ENCODE measurements at regions of chr6 and their contacts with region 1.

Region 1: DNA sequence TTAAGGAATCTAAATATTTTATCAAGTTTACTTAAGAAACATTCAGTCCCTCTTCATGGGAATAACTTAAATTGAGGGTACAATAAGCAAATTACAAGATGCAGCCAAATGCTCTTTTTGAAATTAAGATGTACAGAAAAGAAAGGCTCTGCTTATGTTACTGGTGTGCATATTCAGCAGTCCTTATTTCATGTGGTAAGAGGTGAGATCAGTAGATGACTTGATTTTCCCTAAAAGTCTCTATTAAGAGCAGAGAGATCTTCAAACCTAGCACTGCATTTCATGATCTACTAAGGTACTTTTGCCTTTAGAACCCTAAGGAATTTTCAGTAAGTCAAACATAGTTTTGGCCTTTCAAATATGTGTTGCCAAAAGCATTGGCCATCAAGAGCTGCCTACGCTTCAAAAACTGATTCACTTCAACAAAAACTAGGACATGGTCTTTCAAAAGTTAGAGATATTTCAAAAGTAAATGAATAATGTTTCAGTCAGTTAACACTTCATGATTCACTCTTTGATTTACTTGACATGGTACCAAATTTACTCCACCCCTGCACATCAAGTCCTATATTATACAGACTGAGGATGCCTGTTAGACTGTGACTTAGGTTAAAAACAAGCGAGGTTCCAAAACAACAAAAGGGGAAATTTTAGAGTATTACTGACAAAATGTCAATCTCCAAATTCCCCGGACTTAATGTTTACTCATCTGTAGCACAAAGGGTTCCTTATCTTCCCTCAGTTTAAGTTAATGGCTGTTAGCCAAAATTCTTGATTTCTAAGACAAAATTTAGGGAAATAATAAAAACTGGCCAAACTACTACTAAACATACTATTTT is 19.2 kb downstream of the C6orf62 start:
- DNase-seq: no peak
- H3K4me3 Mint-ChIP-seq: no peak overlapping the region
- H3K27ac Mint-ChIP-seq: no peak overlapping the region
- H3K4me1 Mint-ChIP-seq: peaks cover 41% of the 10 kb centered on the region
- H3K27me3 Mint-ChIP-seq: no peaks in the 10 kb centered on the region
- CTCF ChIP-seq: no peak

Region 2: GRCh38 chr6:24646782-24647181 is 53.0 kb before region 1 on chr6:
- CTCF ChIA-PET with region 1: no interaction called
- intact Hi-C with region 1: loop called (anchors 5 kb)
- DNase-seq: peak; percentile 60
- H3K4me3 Mint-ChIP-seq: peak overlapping the region; percentile 96
- H3K27ac Mint-ChIP-seq: peak overlapping the region; percentile 80
- H3K4me1 Mint-ChIP-seq: peaks cover 38% of the 10 kb centered on the region
- H3K27me3 Mint-ChIP-seq: no peaks in the 10 kb centered on the region
- CTCF ChIP-seq: no peak

Region 3: GRCh38 chr6:24766680-24767462 is 67.1 kb after region 1 on chr6:
- CTCF ChIA-PET with region 1: interaction called, 6 read pairs
- intact Hi-C with region 1: loop called (anchors 1 kb)
- DNase-seq: no peak
- H3K4me3 Mint-ChIP-seq: no peak overlapping the region
- H3K27ac Mint-ChIP-seq: peak overlapping the region; percentile 17
- H3K4me1 Mint-ChIP-seq: peaks cover 25% of the 10 kb centered on the region
- H3K27me3 Mint-ChIP-seq: no peaks in the 10 kb centered on the region
- CTCF ChIP-seq: peak; percentile 67

Region 4: DNA sequence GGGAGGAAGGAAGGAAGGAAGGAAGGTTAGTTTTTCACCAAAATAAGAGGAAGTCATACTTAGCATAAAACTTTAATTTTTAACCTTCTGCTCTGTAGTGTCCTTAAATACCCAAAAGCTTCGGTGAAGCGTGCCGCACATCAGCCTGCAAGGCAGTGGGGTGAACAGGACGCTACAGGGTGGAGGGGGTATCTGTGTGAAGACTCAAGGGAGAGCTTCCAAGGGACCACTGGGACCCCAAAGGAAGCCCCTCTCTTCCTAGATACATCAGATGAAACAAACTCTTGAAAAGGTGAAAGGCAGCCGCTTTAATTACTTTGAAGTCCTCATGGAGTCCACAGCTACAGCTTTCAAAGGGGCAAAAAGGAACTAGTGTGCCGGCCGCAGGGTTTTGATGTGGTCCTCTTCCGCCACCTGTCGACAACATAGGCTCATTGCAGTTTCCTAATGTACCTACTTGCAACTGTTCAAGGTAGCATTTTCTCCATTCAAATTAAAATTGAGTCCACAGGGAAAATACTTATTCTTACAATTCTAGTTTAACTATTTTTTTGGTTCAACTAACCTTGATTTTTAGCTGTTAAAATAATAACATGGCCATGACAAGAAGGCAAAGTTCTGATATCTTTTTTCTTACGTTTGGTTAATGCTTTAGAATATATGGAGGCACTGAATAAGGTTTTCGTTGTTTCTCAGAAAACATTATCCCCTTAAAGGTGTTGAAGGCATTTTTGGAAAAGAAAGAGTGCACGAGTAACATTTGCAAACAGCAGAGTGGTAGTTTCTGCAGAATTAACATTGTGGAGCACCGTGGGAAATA is 371.0 kb after region 1 on chr6:
- CTCF ChIA-PET with region 1: no interaction called
- intact Hi-C with region 1: loop called (anchors 5 kb)
- DNase-seq: peak; percentile 94
- H3K4me3 Mint-ChIP-seq: no peak overlapping the region
- H3K27ac Mint-ChIP-seq: no peak overlapping the region
- H3K4me1 Mint-ChIP-seq: no peaks in the 10 kb centered on the region
- H3K27me3 Mint-ChIP-seq: peaks cover 27% of the 10 kb centered on the region
- CTCF ChIP-seq: peak; percentile 100